ENCODE measurements at regions of chr12 and their contacts with region 1.

Region 1: GRCh38 chr12:128914908-128915563 is 61.8 kb downstream of the GLT1D1 start:
- DNase-seq: peak; percentile 83
- ATAC-seq: peak; percentile 90
- H3K4me3 Mint-ChIP-seq: peak overlapping the region; percentile 10
- H3K27ac Mint-ChIP-seq: peak overlapping the region; percentile 85
- H3K4me1 Mint-ChIP-seq: peaks cover 42% of the 10 kb centered on the region
- H3K27me3 Mint-ChIP-seq: peaks cover 2% of the 10 kb centered on the region
- CTCF ChIP-seq: no peak

Region 2: DNA sequence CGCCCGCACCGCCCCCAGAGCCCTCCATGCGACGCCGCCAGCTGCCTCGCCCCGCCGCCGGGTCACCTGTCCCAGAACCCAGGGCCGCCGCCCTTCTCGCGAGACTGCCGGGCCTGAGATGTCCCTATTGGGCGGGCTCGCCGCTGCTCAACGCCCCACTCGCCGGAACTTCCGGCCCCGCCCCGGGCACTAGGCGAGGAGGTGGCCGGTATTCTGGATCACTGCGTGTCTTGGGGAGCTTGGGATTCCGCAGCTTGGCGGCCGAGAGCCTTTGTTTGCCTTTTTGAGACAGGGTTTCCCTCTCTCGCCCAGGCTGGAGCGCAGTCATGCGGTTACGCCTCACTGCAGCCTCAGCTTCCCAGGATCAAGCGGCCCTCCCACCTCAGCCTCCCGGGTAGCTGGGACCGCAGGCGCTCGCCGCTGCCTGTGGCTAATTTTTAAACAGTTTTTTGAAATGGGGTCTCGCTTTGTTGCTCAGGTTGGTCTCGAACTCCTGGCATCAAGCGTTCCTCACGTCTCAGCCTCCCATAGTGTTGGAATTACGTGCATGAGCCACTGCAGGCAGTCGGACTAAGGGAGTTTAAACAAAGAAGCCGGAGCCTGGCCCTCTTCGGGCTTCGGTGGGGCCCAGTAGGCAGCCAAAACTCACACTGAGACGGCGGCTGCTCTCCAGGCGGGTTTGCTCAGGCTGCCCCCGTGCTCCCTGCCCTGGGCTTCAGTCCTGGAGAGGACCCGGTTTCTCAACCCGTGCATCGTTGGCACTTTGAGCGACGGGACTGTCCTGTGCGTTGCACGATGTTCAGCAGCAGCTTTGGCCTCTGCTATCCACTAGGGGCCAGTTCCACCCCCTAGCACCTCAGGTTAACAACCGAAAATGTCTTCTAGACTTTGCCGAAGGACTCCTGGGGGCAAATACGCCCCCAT is 90.9 kb before region 1 on chr12 and contains the start of gene SLC15A4:
- CTCF ChIA-PET with region 1: interaction called, 3 read pairs
- POLR2A ChIA-PET with region 1: interaction called, 3 read pairs
- intact Hi-C with region 1: loop called (anchors 5 kb)
- DNase-seq: peak; percentile 97
- ATAC-seq: peak; percentile 96
- H3K4me3 Mint-ChIP-seq: peak within 1 kb of the TSS; percentile 85
- H3K27ac Mint-ChIP-seq: peak within 1 kb of the TSS; percentile 75
- H3K4me1 Mint-ChIP-seq: peaks cover 25% of the 10 kb centered on the region
- H3K27me3 Mint-ChIP-seq: peaks cover 3% of the 10 kb centered on the region
- CTCF ChIP-seq: no peak
- total RNA-seq, gene SLC15A4: 26.4 to 26.8 TPM

Region 3: GRCh38 chr12:128903236-128903635 is 11.8 kb before region 1 on chr12:
- CTCF ChIA-PET with region 1: no interaction called
- POLR2A ChIA-PET with region 1: no interaction called
- intact Hi-C with region 1: no loop called
- DNase-seq: no peak
- ATAC-seq: no peak
- H3K4me3 Mint-ChIP-seq: no peak overlapping the region
- H3K27ac Mint-ChIP-seq: no peak overlapping the region
- H3K4me1 Mint-ChIP-seq: peaks cover 4% of the 10 kb centered on the region
- H3K27me3 Mint-ChIP-seq: no peaks in the 10 kb centered on the region
- CTCF ChIP-seq: no peak

Measured in activated CD8-positive, alpha-beta T cell treated with anti-CD3 and anti-CD28 coated beads for 36 hours (primary cell).